ENCODE measurements at regions of chr13 and their contacts with region 1.

Region 1: DNA sequence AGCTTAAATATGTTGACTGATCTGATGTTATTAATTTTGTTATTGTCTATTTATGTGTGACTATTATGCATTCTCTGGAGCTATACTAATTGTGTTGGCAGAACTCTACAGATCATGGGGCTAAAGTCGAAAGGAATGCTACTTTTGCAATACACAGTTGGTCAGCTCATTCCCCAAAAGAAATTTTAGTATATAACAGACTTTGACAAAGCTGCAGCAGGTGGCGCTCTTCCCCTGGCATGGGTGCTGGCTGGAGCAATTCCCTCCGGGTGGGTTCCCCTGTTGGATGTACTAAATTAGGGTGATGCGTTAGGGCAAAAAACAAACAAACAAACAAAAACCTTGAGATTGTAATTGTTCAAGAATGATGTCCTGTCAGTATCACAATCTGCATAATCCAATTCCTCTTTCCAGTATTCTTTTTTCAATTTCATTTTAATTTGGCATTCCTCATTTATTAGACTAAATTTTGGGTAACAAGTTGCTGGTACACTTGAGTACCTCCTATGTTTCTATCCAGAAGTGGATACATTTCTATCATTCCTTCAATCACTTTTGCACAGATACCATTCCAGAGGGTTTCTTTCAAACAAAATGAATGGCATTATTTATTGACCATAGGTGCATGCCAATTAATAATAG is 322.8 kb upstream of the EDNRB start:
- DNase-seq: peak; percentile 15
- CTCF ChIP-seq: peak; percentile 69

Region 2: GRCh38 chr13:78054157-78054556 is 187.2 kb before region 1 on chr13:
- CTCF ChIA-PET with region 1: no interaction called
- POLR2A ChIA-PET with region 1: no interaction called
- DNase-seq: no peak
- CTCF ChIP-seq: no peak

Region 3: DNA sequence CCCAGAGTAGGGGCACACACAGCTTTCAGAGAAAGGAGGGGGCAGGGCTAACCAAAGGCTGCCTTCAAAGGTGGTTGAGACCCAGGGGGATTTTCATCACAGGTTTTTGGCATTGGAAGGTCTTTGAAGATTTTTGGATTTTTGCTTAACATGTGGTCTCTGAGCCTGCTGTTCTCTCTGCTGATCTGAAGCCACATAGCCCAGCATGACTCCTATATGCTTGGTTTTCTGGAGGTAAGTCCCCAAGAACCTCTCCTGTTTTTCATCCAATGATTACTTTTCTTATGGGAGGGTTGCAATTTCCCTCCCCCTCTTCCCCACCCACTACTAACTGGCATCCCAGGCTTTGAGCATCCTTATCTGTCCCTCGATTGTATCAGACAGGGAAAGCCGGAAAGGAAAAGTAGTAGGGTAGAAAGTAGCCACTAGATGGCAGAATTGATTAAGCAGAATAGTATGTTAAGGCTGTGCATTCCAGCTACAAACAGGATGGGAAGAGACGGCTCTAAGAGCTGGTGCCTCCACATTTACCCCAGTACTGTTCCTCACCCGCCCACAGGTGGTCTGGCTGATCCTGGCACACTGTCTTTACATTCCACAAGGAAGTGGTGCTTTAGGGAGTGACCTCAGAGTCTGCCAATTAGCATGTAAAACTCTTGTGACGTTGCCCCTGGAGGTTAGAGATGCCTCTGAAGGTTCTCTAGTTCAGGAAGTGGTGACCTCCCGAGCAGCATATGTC is 103.8 kb before region 1 on chr13:
- CTCF ChIA-PET with region 1: interaction called, 11 read pairs
- POLR2A ChIA-PET with region 1: no interaction called
- DNase-seq: peak; percentile 37
- CTCF ChIP-seq: peak; percentile 72

Region 4: GRCh38 chr13:78228940-78229339 is 12.5 kb before region 1 on chr13:
- CTCF ChIA-PET with region 1: interaction called, 10 read pairs
- POLR2A ChIA-PET with region 1: no interaction called
- DNase-seq: no peak
- CTCF ChIP-seq: no peak

Region 5: GRCh38 chr13:78978381-78978998 is 737.1 kb after region 1 on chr13:
- CTCF ChIA-PET with region 1: interaction called, 45 read pairs
- POLR2A ChIA-PET with region 1: interaction called, 3 read pairs
- DNase-seq: peak; percentile 39
- CTCF ChIP-seq: peak; percentile 72